ENCODE measurements at regions of chr3 and their contacts with region 1.

Region 1: GRCh38 chr3:184154885-184155643 is at the start of gene DVL3:
- DNase-seq: peak; percentile 73 to 87 (median 82)
- ATAC-seq: peak; percentile 53 to 92 (median 82)
- H3K4me3 ChIP-seq: peak within 1 kb of the TSS; percentile 63 to 99 (median 90)
- H3K27ac ChIP-seq: peak within 1 kb of the TSS; percentile 73 to 98 (median 94)
- H3K4me1 ChIP-seq: peaks cover 2 to 55% (median 37%) of the 10 kb centered on the region in 12 donors
- H3K27me3 ChIP-seq: no peaks in the 10 kb centered on the region
- CTCF ChIP-seq: no peak
- POLR2A ChIP-seq: peak in 1 of 2 donors; percentile 49
- total RNA-seq, gene DVL3: 53.4 to 94.2 (median 70.9) TPM

Region 2: DNA sequence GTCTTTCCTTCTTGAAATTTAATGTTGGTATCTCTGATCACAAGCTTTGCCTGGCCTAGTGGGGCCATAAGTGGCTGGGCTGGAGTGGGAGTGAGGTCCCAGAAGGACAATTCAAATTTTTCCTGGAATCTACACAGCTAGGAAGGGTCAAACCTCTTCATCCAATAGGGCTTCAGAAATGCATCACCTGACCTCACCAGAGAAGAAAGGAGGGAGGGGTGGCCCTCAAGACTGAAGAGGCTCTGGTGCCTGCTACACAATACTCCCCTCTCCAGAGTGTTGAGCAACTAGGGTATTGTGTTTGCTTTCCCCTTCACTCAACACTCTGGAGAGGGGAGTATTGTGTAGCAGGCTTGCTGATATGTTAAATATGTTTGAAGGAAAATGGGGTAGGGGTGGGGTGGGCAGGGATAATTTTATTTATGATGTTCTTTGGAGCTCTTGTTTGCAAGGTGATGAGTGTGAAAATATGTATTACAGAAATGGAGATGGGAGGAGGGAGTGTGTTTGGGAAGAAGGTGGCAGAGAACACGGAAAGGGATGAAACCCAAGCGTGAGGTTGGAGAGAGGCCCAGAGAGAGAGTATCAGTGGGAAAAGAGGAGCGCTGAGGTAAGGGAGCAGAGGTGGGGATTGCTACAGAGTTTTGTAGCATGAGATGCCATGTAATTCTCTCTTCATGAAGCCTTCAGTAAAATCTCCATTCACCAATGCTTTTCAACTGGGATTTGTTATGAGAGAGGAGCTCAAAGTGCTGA is 525.3 kb before region 1 on chr3:
- intact Hi-C with region 1: no loop called
- DNase-seq: no peak
- ATAC-seq: peak in 3 of 4 donors; percentile 41 to 61 (median 55)
- H3K4me3 ChIP-seq: no peak overlapping the region
- H3K27ac ChIP-seq: peak overlapping the region in 11 of 12 donors; percentile 32 to 89 (median 70)
- H3K4me1 ChIP-seq: peaks cover 0 to 45% (median 11%) of the 10 kb centered on the region in 12 donors
- H3K27me3 ChIP-seq: no peaks in the 10 kb centered on the region
- CTCF ChIP-seq: no peak
- POLR2A ChIP-seq: no peak

Region 3: GRCh38 chr3:184174646-184175492 is 19.8 kb after region 1 on chr3 and contains the start of gene AP2M1:
- intact Hi-C with region 1: loop called in 4 of 10 experiments (anchors 1 to 2 kb)
- DNase-seq: peak; percentile 98 to 99 (median 98)
- ATAC-seq: peak; percentile 91 to 97 (median 95)
- H3K4me3 ChIP-seq: peak within 1 kb of the TSS; percentile 64 to 100 (median 97)
- H3K27ac ChIP-seq: peak within 1 kb of the TSS; percentile 90 to 99 (median 96)
- H3K4me1 ChIP-seq: peaks cover 0 to 54% (median 33%) of the 10 kb centered on the region in 12 donors
- H3K27me3 ChIP-seq: no peaks in the 10 kb centered on the region
- CTCF ChIP-seq: peak in 1 of 12 donors; percentile 5
- POLR2A ChIP-seq: peak; percentile 40 to 93
- total RNA-seq, gene AP2M1: 225 to 400 (median 337) TPM